RWPE1 (cell line): ENCODE measurements at regions of chr9 and their contacts with region 1.

Region 1: DNA sequence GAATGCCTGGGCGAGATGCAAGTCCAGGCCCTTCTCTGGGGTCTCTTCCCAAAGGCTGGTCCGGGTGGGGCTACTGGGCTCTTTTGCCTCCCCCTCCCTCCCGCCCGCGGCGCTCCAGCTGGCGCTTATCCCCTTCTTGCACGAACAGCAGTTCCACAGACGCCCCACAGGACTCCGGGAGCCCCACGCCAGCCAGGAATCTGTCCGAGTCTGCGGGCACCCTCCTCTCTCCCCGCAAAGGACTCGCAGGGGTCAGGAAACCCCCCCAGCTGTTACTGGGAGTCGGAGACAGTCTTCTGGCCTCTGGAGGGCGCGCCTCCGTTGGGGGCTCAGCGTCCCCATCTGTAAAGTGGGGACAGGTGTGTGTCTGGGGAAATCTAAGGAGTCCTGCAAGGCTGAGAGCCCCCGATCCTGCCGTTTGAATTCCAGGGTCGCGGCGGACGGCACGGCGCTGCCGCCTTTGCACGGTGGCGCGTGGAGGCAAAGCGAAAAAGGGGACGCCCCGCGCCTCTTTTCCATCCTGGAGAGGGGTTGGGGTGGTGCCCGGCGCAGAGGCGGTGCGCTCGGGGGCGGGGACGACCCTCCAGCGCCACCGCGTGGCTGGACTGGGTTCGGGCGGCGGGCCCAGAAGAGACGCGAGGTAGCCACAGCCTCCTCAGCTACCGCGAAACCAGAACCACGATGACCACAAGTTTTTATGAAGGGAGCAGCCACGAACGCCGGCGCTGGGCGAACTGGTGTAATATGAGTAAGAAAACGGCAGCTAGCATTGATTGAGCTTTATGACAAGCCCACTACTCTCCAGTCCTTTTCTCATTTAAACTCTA is 2.9 kb upstream of the CCIN start:
- DNase-seq: peak; percentile 93
- H3K27ac ChIP-seq: peak overlapping the region; percentile 7; the same call in 1 of the 2 replicates
- CTCF ChIP-seq: peak; percentile 100

Region 2: GRCh38 chr9:36101916-36102741 is 64.2 kb before region 1 on chr9:
- CTCF ChIA-PET with region 1: interaction called, 11 read pairs
- POLR2A ChIA-PET with region 1: no interaction called
- DNase-seq: peak; percentile 74
- H3K27ac ChIP-seq: no peak overlapping the region
- CTCF ChIP-seq: no peak